Spleen (tissue), 13 donors: ENCODE measurements at regions of chr2 and their contacts with region 1.

Region 1: GRCh38 chr2:9813312-9814133 is 29.8 kb upstream of the TAF1B start:
- DNase-seq: peak; percentile 89
- H3K4me3 ChIP-seq: peak overlapping the region in 1 of 8 donors; percentile 41
- H3K27ac ChIP-seq: no peak overlapping the region
- H3K4me1 ChIP-seq: peaks cover 0 to 19% (median 13%) of the 10 kb centered on the region in 6 donors
- H3K27me3 ChIP-seq: peaks cover 0 to 20% (median 0%) of the 10 kb centered on the region in 7 donors
- CTCF ChIP-seq: peak; percentile 63 to 92 (median 85)
- POLR2A ChIP-seq: no peak

Region 2: DNA sequence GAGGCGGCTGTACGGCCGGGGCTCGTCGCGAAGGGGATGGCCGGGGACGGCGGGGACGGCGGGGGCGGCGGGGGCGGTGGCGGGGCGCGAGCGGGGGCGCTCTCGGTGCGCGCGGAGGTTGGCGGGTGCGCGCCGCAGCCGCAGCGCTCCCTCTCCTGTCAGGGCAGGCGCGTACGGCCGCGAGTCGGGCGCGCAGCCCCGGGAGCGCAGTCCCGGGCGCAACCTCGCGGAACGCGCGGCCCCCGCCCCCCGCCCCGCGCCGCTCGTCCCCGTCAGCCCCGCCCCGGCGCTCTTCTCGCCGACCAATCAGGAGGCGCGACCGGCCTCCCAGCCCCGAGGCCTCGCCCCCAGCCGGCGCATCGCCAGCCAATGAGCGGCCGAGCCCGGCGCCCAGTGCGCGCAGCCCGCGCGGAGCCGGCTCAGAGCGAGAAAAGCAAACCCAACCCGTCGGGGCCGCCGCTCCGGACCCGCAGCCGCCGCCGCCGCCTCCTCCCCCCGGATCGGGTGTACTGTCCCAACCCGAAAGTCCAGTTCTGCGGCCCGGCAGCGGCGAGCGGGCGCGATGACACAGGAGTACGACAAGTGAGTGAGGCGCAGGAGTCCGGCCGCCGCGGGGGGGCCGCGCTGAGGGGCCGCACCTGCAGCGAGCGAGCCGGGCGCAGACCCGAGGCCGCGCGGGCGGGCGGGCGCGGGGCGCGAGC is 137.9 kb after region 1 on chr2 and contains the start of gene GRHL1:
- intact Hi-C with region 1: loop called (anchors 10 kb)
- DNase-seq: peak; percentile 98
- H3K4me3 ChIP-seq: peak within 1 kb of the TSS; percentile 58 to 92 (median 75)
- H3K27ac ChIP-seq: peak within 1 kb of the TSS; percentile 33 to 88 (median 78)
- H3K4me1 ChIP-seq: peaks cover 4 to 27% (median 19%) of the 10 kb centered on the region in 6 donors
- H3K27me3 ChIP-seq: peaks cover 0 to 58% (median 10%) of the 10 kb centered on the region in 7 donors
- CTCF ChIP-seq: peak in 2 of 11 experiments; percentile 9 to 21
- POLR2A ChIP-seq: no peak
- total RNA-seq, gene GRHL1: 1.0 to 3.0 (median 1.6) TPM

Region 3: DNA sequence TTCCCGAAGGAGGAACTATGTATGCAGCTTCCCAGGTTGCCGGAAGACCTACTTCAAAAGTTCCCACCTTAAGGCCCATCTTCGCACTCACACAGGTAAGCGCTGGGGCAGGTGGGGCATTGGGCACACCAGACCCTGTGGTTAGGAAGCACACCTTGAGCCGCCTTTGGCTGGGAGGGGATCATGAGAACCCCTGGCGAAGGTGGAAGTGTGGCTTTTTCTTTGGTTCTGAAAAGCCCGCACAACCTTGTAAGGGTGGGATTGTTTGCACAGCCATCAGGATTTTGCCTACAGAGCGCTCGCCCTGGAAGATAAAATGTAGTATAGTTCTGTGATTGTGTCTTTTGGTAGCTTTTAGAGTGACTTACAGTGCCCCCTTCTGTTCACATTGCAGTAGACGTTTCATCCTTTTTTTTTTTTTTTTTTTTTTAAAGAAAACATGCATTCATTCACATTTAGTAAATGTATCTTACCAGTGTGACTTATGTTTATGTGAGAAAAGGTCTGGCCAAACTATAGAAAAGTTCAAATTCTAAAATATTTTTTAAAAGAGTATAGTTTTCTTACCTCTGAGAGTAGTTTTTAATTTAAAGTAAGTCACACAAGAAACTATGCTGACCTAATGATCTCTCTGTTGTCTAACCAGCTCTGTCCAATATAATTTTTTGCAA is 235.1 kb after region 1 on chr2:
- intact Hi-C with region 1: loop called (anchors 5 kb)
- DNase-seq: peak; percentile 72
- H3K4me3 ChIP-seq: peak overlapping the region in 1 of 8 donors; percentile 11
- H3K27ac ChIP-seq: peak overlapping the region in 2 of 8 donors; percentile 12 to 21
- H3K4me1 ChIP-seq: peaks cover 18 to 81% (median 51%) of the 10 kb centered on the region in 6 donors
- H3K27me3 ChIP-seq: no peaks in the 10 kb centered on the region
- CTCF ChIP-seq: peak; percentile 46 to 77 (median 65)
- POLR2A ChIP-seq: no peak